Calu3 (cell line): ENCODE measurements at regions of chr11 and their contacts with region 1.

Region 1: GRCh38 chr11:23471878-23472277 is 611.6 kb upstream of the CCDC179 start:
- DNase-seq: no peak
- H3K4me3 Mint-ChIP-seq: no peak overlapping the region
- H3K27ac Mint-ChIP-seq: no peak overlapping the region
- H3K4me1 Mint-ChIP-seq: no peaks in the 10 kb centered on the region
- H3K27me3 Mint-ChIP-seq: no peaks in the 10 kb centered on the region
- CTCF ChIP-seq: no peak

Region 2: GRCh38 chr11:23494963-23495362 is 23.1 kb after region 1 on chr11:
- CTCF ChIA-PET with region 1: no interaction called
- intact Hi-C with region 1: loop called (anchors 1 kb)
- DNase-seq: no peak
- H3K4me3 Mint-ChIP-seq: no peak overlapping the region
- H3K27ac Mint-ChIP-seq: no peak overlapping the region
- H3K4me1 Mint-ChIP-seq: no peaks in the 10 kb centered on the region
- H3K27me3 Mint-ChIP-seq: no peaks in the 10 kb centered on the region
- CTCF ChIP-seq: no peak

Region 3: DNA sequence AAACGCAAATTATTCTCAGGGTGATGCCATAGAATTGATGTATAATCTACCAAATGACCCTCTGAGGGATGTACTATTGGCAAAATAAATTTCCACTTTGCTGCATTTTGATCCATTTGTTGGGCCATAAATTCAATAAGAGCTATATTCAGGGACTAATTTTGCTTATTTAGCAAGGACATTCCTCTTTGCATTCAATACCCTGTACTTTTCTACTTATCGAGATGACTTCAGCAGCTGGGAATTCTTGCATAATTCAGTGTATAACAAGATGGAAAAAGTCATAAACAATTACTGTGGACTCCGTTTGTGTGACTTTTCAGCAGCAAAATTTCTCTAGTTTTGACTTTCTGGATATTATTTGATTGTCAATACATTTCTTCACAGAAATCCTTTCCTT is 133.1 kb after region 1 on chr11:
- CTCF ChIA-PET with region 1: no interaction called
- intact Hi-C with region 1: no loop called
- DNase-seq: no peak
- H3K4me3 Mint-ChIP-seq: no peak overlapping the region
- H3K27ac Mint-ChIP-seq: no peak overlapping the region
- H3K4me1 Mint-ChIP-seq: no peaks in the 10 kb centered on the region
- H3K27me3 Mint-ChIP-seq: no peaks in the 10 kb centered on the region
- CTCF ChIP-seq: no peak